ENCODE measurements at regions of chr2 and their contacts with region 1.

Region 1: GRCh38 chr2:67650291-67651133 is 253.4 kb downstream of the ETAA1 start:
- DNase-seq: peak; percentile 96
- ATAC-seq: peak; percentile 93
- H3K4me3 ChIP-seq: no peak overlapping the region
- H3K27ac ChIP-seq: peak overlapping the region; percentile 61; the same call in 1 of the 2 replicates
- H3K4me1 ChIP-seq: peaks cover 11% of the 10 kb centered on the region
- H3K27me3 ChIP-seq: no peaks in the 10 kb centered on the region
- CTCF ChIP-seq: peak; percentile 93
- POLR2A ChIP-seq: peak; percentile 63; the same call in 1 of the 2 replicates
- RAD21 ChIP-seq: peak; percentile 96

Region 2: DNA sequence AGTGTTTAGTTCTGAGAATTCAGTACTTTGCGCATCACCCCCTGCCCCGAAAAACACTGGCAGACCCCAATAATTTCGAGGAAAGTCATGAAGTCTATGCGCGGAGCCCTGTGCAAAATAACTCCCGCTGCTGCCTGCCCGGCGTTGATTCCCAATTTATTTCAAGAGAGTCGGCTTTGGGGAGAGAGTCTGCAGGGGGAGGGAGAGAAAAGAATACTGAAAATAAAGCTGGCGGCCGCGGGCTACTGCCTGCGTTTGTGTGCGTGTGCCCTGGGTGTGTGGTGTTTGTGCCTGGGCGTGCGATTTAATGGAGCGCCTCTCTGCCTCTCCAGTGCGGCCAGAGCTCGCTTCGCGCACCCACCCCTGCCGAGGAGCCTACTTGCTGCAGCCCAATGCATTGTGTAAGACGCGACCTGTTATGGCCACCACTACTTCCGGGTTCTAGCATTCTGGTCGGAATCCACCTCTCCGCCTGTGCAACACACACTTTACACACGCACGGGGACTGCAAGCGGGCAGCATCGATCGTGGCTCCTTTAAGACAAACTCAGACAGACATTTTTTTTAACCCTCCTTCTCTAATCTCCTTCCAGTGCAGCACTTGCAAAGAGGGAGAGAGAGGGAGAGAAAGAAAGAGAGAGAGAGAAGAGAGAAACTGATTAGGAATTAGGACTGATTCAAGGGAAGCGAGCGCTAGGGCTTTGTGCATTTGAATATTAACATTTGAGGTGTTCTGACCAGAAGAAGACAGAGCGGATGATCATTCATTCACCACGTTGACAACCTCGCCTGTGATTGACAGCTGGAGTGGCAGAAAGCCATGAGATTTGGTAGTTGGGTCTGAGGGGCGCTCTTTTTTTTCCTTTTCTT is 1215.6 kb before region 1 on chr2 and contains the start of gene MEIS1:
- CTCF ChIA-PET with region 1: interaction called, 5 read pairs
- POLR2A ChIA-PET with region 1: no interaction called
- dilution Hi-C with region 1: no loop called
- in situ Hi-C with region 1: loop called (anchors 10 kb)
- intact Hi-C with region 1: loop called (anchors 1 kb)
- DNase-seq: peak; percentile 100
- ATAC-seq: peak; percentile 50
- H3K4me3 ChIP-seq: peak within 1 kb of the TSS; percentile 99
- H3K27ac ChIP-seq: peak within 1 kb of the TSS; percentile 99
- H3K4me1 ChIP-seq: peaks cover 5% of the 10 kb centered on the region; the same call in 1 of the 2 replicates
- H3K27me3 ChIP-seq: no peaks in the 10 kb centered on the region
- CTCF ChIP-seq: no peak
- POLR2A ChIP-seq: peak; percentile 99
- RAD21 ChIP-seq: peak; percentile 10
- total RNA-seq, gene MEIS1: 157 and 209 TPM in 2 replicates

Region 3: DNA sequence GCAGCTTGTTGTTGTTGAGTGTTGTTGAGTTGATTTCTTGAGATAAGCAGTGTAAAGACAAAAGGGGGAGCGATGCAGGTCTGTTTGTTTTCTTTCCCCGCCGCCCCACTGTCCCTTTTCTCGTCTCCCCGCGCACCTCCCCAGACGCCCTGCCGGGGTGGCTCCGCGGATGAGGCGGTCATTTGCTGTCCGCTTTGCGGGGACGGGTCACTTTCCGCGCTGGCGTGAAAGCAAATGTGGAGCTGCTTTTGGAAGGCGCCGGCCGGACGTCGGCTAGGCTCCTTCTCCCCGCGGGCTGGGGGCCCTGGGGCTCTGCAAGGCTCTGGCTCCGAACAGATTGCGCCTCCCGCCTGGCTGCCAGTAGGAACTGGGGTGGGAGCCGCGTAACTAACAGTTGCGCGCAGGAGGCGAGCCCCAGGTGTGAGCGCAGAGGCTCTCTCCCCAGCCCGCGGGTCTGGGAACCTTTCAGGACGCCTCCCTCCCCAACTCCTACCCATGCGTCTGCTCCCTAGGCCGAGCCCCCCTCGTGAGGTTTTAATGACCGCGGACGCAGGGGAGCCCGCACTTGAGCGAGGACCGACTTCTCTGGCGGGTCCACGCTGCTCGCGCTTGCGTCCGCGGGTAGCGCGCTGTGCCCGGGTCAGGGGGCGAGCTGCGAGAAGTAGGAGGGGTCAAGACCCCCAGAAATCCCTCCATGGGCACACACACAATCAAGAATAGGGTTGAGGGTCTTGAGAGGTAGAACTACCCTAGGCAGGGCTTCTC is 1069.0 kb before region 1 on chr2:
- CTCF ChIA-PET with region 1: interaction called, 3 read pairs
- POLR2A ChIA-PET with region 1: no interaction called
- dilution Hi-C with region 1: no loop called
- in situ Hi-C with region 1: loop called (anchors 25 kb)
- intact Hi-C with region 1: loop called (anchors 1 kb)
- DNase-seq: peak; percentile 63
- ATAC-seq: peak; percentile 32
- H3K4me3 ChIP-seq: peak overlapping the region; percentile 43
- H3K27ac ChIP-seq: peak overlapping the region; percentile 90
- H3K4me1 ChIP-seq: peaks cover 21% of the 10 kb centered on the region
- H3K27me3 ChIP-seq: no peaks in the 10 kb centered on the region
- CTCF ChIP-seq: no peak
- POLR2A ChIP-seq: peak; percentile 34; the same call in 1 of the 2 replicates
- RAD21 ChIP-seq: no peak

Region 4: DNA sequence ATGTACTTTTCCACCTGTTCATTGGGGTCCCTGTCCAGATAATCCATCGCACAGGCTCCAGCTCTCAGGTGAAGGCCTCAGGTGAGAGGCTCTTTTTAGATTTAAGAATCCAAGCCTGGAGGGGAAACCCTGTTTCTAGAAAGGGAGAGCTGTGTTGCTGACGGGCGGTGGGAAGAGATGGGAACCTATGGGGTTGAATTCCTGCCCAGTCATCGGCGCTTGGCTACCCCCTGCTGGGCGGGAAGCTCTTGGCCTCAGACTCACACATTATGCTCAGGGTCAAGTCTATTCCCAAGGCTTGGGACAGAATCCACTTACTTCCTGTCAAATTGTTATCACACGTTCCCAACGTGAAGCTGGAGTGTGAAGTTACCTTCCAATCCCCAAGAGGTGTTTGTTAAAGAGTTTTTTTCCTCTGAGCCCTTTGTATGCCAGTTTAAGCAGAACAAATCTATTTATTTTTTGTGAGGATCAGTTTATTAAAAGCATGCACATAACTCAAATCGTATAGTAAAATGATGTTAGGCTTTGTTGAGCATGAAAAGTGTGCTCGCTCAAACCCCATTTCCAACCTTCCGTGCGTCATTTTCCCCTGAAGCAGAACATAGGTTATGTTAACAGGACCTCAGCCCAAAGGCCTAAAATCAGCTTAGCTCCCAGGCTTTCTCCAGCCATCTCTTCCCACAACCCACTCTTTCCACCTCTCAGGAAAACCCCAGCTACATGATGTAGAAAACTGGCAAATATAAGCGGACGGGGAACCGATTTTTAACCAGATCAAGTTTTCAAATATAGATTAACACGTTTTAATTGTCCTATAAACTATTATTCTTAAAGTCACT is 435.1 kb before region 1 on chr2:
- CTCF ChIA-PET with region 1: no interaction called
- POLR2A ChIA-PET with region 1: no interaction called
- dilution Hi-C with region 1: no loop called
- in situ Hi-C with region 1: no loop called
- intact Hi-C with region 1: loop called (anchors 1 kb)
- DNase-seq: peak; percentile 92
- ATAC-seq: peak; percentile 95
- H3K4me3 ChIP-seq: no peak overlapping the region
- H3K27ac ChIP-seq: peak overlapping the region; percentile 86
- H3K4me1 ChIP-seq: peaks cover 16% of the 10 kb centered on the region
- H3K27me3 ChIP-seq: no peaks in the 10 kb centered on the region
- CTCF ChIP-seq: peak; percentile 88
- POLR2A ChIP-seq: no peak
- RAD21 ChIP-seq: peak; percentile 95

Region 5: DNA sequence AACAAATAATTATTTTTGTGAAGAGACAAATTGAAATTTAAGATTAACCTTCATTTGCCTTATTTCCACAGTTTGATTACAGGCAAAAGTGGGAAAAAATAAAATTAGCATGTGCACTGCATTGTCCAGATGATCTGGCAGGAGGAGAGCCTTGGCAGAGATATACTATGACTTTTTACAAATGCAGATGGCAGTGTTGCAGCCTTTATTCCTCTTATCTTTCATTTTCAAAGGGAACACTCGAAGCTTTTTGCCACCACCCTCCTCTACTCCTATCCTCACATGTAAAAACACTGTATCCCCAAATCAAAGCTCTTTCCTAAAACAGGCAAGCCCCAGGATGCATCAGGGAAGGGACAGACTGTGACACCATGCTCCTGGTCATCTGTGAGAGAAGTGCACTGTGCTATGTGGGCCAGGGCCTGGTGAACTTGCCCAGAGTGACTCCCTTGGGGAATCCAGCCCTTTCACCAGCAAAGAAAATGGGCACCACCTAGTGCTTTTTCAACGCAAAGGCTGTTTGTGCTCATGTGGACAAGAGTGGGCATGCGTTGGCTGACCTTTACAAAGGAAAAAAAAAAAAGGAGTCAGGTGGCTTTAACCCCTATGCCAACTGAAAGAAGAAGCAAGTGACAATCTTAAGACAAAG is 328.0 kb before region 1 on chr2:
- CTCF ChIA-PET with region 1: no interaction called
- POLR2A ChIA-PET with region 1: interaction called, 3 read pairs
- dilution Hi-C with region 1: no loop called
- in situ Hi-C with region 1: no loop called
- intact Hi-C with region 1: loop called (anchors 2 kb)
- DNase-seq: peak; percentile 76
- ATAC-seq: peak; percentile 87
- H3K4me3 ChIP-seq: no peak overlapping the region
- H3K27ac ChIP-seq: peak overlapping the region; percentile 47; the same call in 1 of the 2 replicates
- H3K4me1 ChIP-seq: peaks cover 5% of the 10 kb centered on the region
- H3K27me3 ChIP-seq: no peaks in the 10 kb centered on the region
- CTCF ChIP-seq: peak; percentile 57
- POLR2A ChIP-seq: no peak
- RAD21 ChIP-seq: peak; percentile 76

Region 6: DNA sequence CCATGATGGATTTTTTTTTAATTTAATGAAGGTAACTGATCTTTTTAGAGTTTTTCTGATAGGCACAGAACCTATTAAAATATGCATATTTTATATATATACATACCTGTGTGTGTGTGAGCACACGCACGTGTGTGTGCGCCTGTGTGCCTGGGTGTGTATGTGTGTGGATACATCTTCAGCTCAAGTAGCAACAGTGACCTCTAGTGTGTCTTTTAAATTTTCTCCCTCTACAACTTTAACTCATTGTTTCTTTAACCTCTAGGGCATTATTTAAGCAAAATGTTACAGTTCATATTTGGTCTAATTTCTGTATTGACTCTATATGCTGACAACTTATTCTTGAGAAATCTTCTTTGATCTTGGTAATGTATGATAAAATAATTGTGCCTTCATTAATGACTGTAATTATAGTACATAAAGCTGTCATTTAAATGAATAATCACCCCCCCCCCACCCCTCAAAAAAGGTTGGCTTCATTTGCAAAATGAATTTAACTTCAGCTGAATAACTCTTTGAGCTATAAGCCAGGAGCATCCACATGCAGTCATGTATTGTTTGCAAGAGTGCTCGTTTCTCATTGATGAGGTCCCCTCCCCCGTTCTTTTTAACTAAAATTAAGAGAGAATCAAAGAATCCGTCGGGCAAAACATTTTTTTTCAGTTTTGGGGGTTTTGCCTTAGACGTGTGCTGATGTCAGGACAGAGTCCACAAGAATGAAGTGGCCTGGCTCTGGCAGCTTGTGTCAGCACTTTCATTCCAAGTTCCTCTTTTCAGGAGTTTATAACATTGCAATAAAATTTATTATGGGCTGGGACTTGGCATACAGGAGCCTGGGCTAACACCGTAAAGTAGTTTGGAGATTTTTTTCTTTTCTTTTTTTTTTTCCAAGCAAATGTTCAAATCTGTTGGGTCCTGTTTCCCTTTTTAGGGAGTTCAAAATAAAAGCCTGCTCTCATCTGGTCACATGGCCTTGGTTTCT is 173.4 kb before region 1 on chr2:
- CTCF ChIA-PET with region 1: interaction called, 7 read pairs
- POLR2A ChIA-PET with region 1: no interaction called
- dilution Hi-C with region 1: no loop called
- in situ Hi-C with region 1: no loop called
- intact Hi-C with region 1: loop called (anchors 2 kb)
- DNase-seq: peak; percentile 81
- ATAC-seq: peak; percentile 69
- H3K4me3 ChIP-seq: no peak overlapping the region
- H3K27ac ChIP-seq: no peak overlapping the region
- H3K4me1 ChIP-seq: no peaks in the 10 kb centered on the region
- H3K27me3 ChIP-seq: no peaks in the 10 kb centered on the region
- CTCF ChIP-seq: peak; percentile 68
- POLR2A ChIP-seq: no peak
- RAD21 ChIP-seq: peak; percentile 81

Region 7: GRCh38 chr2:67797801-67798540 is 147.5 kb after region 1 on chr2:
- CTCF ChIA-PET with region 1: no interaction called
- POLR2A ChIA-PET with region 1: no interaction called
- dilution Hi-C with region 1: no loop called
- in situ Hi-C with region 1: no loop called
- intact Hi-C with region 1: no loop called
- DNase-seq: peak; percentile 66
- ATAC-seq: peak; percentile 60
- H3K4me3 ChIP-seq: no peak overlapping the region
- H3K27ac ChIP-seq: peak overlapping the region; percentile 19; the same call in 1 of the 2 replicates
- H3K4me1 ChIP-seq: peaks cover 8% of the 10 kb centered on the region
- H3K27me3 ChIP-seq: no peaks in the 10 kb centered on the region
- CTCF ChIP-seq: no peak
- POLR2A ChIP-seq: no peak
- RAD21 ChIP-seq: no peak

Region 8: GRCh38 chr2:67840460-67841068 is 190.1 kb after region 1 on chr2:
- CTCF ChIA-PET with region 1: interaction called, 13 read pairs
- POLR2A ChIA-PET with region 1: interaction called, 3 read pairs
- dilution Hi-C with region 1: no loop called
- in situ Hi-C with region 1: no loop called
- intact Hi-C with region 1: loop called (anchors 1 kb)
- DNase-seq: peak; percentile 82
- ATAC-seq: peak; percentile 92
- H3K4me3 ChIP-seq: no peak overlapping the region
- H3K27ac ChIP-seq: no peak overlapping the region
- H3K4me1 ChIP-seq: peaks cover 4% of the 10 kb centered on the region; the same call in 1 of the 2 replicates
- H3K27me3 ChIP-seq: no peaks in the 10 kb centered on the region
- CTCF ChIP-seq: peak; percentile 95
- POLR2A ChIP-seq: 0 out of 2 replicates have a peak, but pooled peaks have one; percentile 36
- RAD21 ChIP-seq: peak; percentile 98

Measured in IMR-90 (cell line).